ENCODE measurements at regions of chr17 and their contacts with region 1.

Region 1: GRCh38 chr17:58692239-58693055 is at the start of gene RAD51C:
- DNase-seq: peak; percentile 67 to 93 (median 85)
- ATAC-seq: peak; percentile 98
- H3K4me3 ChIP-seq: peak within 1 kb of the TSS; percentile 72 to 86
- H3K4me3 Mint-ChIP-seq: peak within 1 kb of the TSS; percentile 91
- H3K27ac ChIP-seq: peak within 1 kb of the TSS; percentile 66 to 82
- H3K27ac Mint-ChIP-seq: peak within 1 kb of the TSS; percentile 89
- H3K4me1 ChIP-seq: peaks cover 17% of the 10 kb centered on the region
- H3K4me1 Mint-ChIP-seq: peaks cover 29% of the 10 kb centered on the region
- H3K27me3 ChIP-seq: no peaks in the 10 kb centered on the region
- H3K27me3 Mint-ChIP-seq: no peaks in the 10 kb centered on the region
- CTCF ChIP-seq: no peak
- total RNA-seq, gene RAD51C: 10.0 to 10.7 TPM

Region 2: DNA sequence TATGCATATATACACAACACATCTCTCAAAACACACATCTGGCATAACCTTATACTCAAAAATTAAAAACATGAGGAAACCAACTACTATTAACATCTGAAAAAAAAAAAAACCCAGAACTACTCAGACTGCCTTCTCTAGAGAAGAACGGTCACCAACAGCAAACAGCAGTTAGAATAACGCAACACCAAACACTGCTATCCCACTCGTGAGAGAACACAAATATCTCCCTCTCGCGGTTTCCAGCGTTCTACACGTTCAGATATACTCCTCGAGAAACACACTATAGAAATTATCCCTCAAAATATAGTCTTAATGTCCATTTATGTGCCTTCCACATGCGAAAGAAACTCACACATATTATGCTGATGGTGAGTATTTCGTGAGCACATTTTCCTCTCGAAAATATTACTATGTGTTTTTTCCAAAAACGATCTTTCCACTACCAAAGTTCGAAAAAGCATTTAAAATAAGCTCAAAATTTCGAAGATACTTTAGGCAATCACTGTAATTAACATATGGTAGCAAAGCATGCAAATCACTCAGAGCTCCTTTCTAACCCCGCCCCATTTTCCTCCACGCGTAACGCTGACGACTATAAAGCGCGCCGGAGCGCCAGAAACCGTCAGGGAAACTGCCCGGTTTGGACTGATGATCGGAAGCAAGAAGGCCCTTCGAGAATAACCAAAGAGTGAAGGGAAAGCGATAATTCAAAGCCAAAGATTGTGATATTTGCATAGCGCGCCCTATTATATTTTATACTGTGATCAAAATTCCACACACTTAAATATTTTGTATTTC is 60.7 kb before region 1 on chr17:
- CTCF ChIA-PET with region 1: no interaction called
- POLR2A ChIA-PET with region 1: interaction called, 28 read pairs
- intact Hi-C with region 1: loop called (anchors 1 kb)
- DNase-seq: peak; percentile 84 to 97 (median 91)
- ATAC-seq: peak; percentile 88
- H3K4me3 ChIP-seq: peak overlapping the region; percentile 48 to 50
- H3K4me3 Mint-ChIP-seq: no peak overlapping the region
- H3K27ac ChIP-seq: peak overlapping the region; percentile 95 to 97
- H3K27ac Mint-ChIP-seq: no peak overlapping the region
- H3K4me1 ChIP-seq: peaks cover 13% of the 10 kb centered on the region
- H3K4me1 Mint-ChIP-seq: peaks cover 2% of the 10 kb centered on the region
- H3K27me3 ChIP-seq: no peaks in the 10 kb centered on the region
- H3K27me3 Mint-ChIP-seq: no peaks in the 10 kb centered on the region
- CTCF ChIP-seq: no peak

Region 3: GRCh38 chr17:58648236-58648806 is 44.1 kb before region 1 on chr17:
- CTCF ChIA-PET with region 1: no interaction called
- POLR2A ChIA-PET with region 1: no interaction called
- intact Hi-C with region 1: no loop called
- DNase-seq: no peak
- ATAC-seq: no peak
- H3K4me3 ChIP-seq: no peak overlapping the region
- H3K4me3 Mint-ChIP-seq: no peak overlapping the region
- H3K27ac ChIP-seq: no peak overlapping the region
- H3K27ac Mint-ChIP-seq: peak overlapping the region; percentile 37
- H3K4me1 ChIP-seq: no peaks in the 10 kb centered on the region
- H3K4me1 Mint-ChIP-seq: no peaks in the 10 kb centered on the region
- H3K27me3 ChIP-seq: no peaks in the 10 kb centered on the region
- H3K27me3 Mint-ChIP-seq: no peaks in the 10 kb centered on the region
- CTCF ChIP-seq: no peak

Region 4: DNA sequence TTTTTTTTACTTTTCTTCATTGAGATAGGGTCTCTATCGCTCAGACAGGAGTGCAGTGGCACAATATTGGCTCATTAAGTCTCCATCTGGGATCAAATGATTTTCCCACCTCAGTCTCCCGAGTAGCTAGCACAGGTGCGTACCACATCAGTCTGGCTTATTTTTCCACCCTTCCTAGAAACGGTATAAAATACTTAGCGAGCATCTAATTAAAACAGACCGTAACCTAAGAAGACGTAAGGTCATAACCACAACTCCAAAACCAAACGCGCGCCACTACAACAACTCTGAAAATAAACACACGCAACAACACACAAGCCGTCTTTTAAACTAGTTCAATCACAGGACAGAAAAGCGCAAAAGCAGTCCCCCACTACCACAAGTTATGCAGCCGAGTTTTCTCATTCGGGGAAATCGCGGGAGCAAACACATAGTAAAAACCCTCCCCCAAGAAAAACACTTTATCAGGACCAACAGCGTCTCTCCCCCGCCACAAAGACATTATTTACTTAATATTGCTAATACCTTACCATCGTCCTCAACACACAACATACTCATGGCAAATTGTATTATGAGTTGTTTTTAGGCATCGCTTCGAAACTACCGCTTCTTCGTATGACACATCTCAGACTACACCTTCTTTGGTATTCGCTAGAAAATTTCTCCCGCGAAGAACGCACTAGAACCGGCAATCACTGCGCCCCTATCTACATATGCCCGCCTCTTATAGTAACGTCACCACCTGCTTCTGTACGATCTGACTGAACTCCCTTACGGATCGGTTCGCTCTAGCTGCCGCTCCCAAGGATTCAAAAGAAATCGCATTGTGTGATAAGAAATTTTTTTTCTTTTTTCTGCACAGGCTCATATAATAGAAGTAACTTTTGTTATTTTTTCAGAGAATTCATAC is 33.4 kb before region 1 on chr17:
- CTCF ChIA-PET with region 1: interaction called, 4 read pairs
- POLR2A ChIA-PET with region 1: interaction called, 4 read pairs
- intact Hi-C with region 1: loop called (anchors 1 to 2 kb)
- DNase-seq: peak; percentile 56 to 95 (median 80)
- ATAC-seq: peak; percentile 83
- H3K4me3 ChIP-seq: peak overlapping the region; percentile 40 to 41
- H3K4me3 Mint-ChIP-seq: peak overlapping the region; percentile 77
- H3K27ac ChIP-seq: peak overlapping the region; percentile 91 to 96
- H3K27ac Mint-ChIP-seq: peak overlapping the region; percentile 100
- H3K4me1 ChIP-seq: no peaks in the 10 kb centered on the region
- H3K4me1 Mint-ChIP-seq: peaks cover 17% of the 10 kb centered on the region
- H3K27me3 ChIP-seq: no peaks in the 10 kb centered on the region
- H3K27me3 Mint-ChIP-seq: no peaks in the 10 kb centered on the region
- CTCF ChIP-seq: no peak

Measured in CD8-positive, alpha-beta T cell (primary cell).